Activated CD8-positive, alpha-beta T cell treated with anti-CD3 and anti-CD28 coated beads for 36 hours (primary cell): ENCODE measurements at regions of chr1 and their contacts with region 1.

Region 1: DNA sequence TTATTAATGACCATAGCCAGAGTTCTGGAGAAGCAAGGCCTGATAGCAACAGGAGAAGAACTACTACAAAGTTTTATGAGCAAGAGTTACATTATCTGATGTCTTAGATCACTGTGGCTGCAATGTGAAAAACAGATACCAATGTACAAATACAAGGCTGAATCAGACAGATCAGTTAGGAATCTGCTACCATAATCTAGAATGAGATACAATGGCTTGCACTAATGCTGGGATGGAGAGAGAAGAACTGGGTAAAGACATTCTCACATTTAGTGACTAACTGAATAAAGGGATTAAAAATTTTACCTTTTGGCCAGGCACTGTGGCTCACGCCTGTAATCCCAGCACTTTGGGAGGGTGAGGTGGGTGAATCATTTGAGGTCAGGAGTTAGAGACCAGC is 41.3 kb downstream of the ARID4B start:
- DNase-seq: no peak
- ATAC-seq: peak; percentile 61
- H3K4me3 Mint-ChIP-seq: no peak overlapping the region
- H3K27ac Mint-ChIP-seq: peak overlapping the region; percentile 23
- H3K4me1 Mint-ChIP-seq: peaks cover 57% of the 10 kb centered on the region
- H3K27me3 Mint-ChIP-seq: no peaks in the 10 kb centered on the region
- CTCF ChIP-seq: no peak

Region 2: DNA sequence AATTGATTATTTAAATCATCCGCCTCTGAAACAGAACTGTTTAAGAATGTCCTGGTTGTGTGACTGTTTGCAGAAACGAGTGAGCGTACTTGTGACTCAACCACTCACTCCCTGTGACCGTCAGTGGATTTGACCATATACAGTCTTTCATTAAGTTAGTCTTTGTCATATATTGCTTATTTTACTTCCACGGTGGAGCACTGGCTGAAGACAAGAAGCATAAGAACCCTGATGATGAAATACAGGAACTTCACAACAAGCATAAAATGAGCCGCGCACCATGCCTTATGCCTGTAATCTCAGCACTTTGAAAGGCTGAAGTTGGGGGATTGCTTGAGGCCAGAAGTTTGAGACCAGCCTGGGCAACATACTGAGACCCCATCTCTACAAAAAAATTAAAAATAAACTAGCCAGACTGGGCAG is 352.0 kb before region 1 on chr1:
- CTCF ChIA-PET with region 1: no interaction called
- POLR2A ChIA-PET with region 1: no interaction called
- intact Hi-C with region 1: no loop called
- DNase-seq: no peak
- ATAC-seq: no peak
- H3K4me3 Mint-ChIP-seq: no peak overlapping the region
- H3K27ac Mint-ChIP-seq: no peak overlapping the region
- H3K4me1 Mint-ChIP-seq: peaks cover 43% of the 10 kb centered on the region
- H3K27me3 Mint-ChIP-seq: no peaks in the 10 kb centered on the region
- CTCF ChIP-seq: no peak

Region 3: GRCh38 chr1:235275223-235275622 is 11.4 kb before region 1 on chr1:
- CTCF ChIA-PET with region 1: interaction called, 11 read pairs
- POLR2A ChIA-PET with region 1: no interaction called
- intact Hi-C with region 1: no loop called
- DNase-seq: no peak
- ATAC-seq: peak; percentile 73
- H3K4me3 Mint-ChIP-seq: peak overlapping the region; percentile 15
- H3K27ac Mint-ChIP-seq: peak overlapping the region; percentile 73
- H3K4me1 Mint-ChIP-seq: peaks cover 70% of the 10 kb centered on the region
- H3K27me3 Mint-ChIP-seq: no peaks in the 10 kb centered on the region
- CTCF ChIP-seq: no peak